ENCODE measurements at regions of chr6 and their contacts with region 1.

Region 1: DNA sequence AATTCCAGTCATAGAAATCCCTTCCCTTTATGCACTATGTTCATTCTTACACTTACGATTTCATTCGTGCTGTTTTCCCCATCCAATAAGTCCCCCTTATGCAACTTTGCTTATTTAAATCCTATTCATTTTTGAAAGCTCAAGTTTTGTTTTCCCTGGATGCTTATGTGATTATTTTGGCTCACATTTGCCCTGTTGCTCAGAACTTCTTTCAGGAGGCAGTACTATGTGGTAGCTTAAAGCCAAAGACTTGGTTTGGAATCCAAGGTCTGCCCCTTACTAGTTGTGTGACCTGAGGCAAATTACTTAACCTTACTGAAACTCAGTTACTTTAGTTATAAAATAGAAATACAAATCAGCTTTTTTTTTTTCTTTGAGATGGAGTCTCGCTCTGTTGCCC is 59.6 kb downstream of the MOXD1 start:
- DNase-seq: no peak
- ATAC-seq: no peak
- H3K4me3 Mint-ChIP-seq: no peak overlapping the region
- H3K27ac Mint-ChIP-seq: no peak overlapping the region
- H3K4me1 Mint-ChIP-seq: peaks cover 3% of the 10 kb centered on the region
- H3K27me3 Mint-ChIP-seq: no peaks in the 10 kb centered on the region
- CTCF ChIP-seq: no peak

Region 2: DNA sequence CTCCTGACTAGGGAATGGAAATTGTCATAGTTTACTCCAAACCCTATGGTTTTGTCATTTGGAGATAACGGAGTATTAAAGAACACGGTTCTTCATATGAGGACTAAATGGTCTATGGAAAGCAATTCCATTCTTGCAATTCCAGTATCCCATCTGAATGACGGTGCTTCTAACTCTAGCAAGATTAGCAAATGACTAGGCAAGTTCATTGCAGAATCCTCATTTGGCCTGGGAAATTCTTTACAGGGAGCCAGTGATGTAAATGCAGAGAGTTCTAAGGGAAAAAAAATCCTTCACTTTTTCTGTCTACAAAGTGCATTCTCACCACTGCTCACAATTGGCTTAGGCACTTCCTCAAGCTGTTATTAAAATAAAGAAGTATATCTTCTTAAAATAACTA is 51.9 kb before region 1 on chr6:
- CTCF ChIA-PET with region 1: no interaction called
- POLR2A ChIA-PET with region 1: no interaction called
- intact Hi-C with region 1: no loop called
- DNase-seq: no peak
- ATAC-seq: no peak
- H3K4me3 Mint-ChIP-seq: no peak overlapping the region
- H3K27ac Mint-ChIP-seq: no peak overlapping the region
- H3K4me1 Mint-ChIP-seq: peaks cover 15% of the 10 kb centered on the region
- H3K27me3 Mint-ChIP-seq: no peaks in the 10 kb centered on the region
- CTCF ChIP-seq: no peak

Region 3: DNA sequence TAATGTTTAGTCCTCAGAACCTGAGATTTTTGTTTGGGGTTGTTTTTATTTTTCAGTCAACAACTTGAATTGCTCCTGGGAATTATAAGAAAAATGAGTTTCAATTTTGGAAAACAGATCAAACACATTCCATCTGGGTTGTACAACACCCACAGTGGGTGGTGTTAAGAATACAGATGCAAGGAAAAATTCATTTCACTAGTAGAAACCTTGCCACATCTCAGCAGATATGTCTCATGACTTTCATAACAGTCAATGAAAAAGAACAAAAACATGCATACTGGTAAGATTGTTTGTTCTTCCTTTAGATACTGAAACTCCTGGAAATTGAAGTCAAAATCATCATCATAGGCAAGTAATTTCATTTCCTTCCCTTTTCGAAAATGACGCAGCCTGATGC is 19.2 kb before region 1 on chr6:
- CTCF ChIA-PET with region 1: no interaction called
- POLR2A ChIA-PET with region 1: no interaction called
- intact Hi-C with region 1: loop called (anchors 2 kb)
- DNase-seq: no peak
- ATAC-seq: no peak
- H3K4me3 Mint-ChIP-seq: no peak overlapping the region
- H3K27ac Mint-ChIP-seq: no peak overlapping the region
- H3K4me1 Mint-ChIP-seq: peaks cover 7% of the 10 kb centered on the region
- H3K27me3 Mint-ChIP-seq: no peaks in the 10 kb centered on the region
- CTCF ChIP-seq: no peak

Measured in activated B cell treated with CpG ODN at 0.5 μM for 24 hours (primary cell).